Dorsolateral prefrontal cortex (tissue), 120 donors: ENCODE measurements at regions of chr1 and their contacts with region 1.

Region 1: GRCh38 chr1:89987170-89987819 is 7.6 kb upstream of the ZNF326 start:
- DNase-seq: peak in 4 of 10 donors; percentile 45 to 79 (median 49)
- H3K4me3 ChIP-seq: peak overlapping the region in 1 of 59 donors; percentile 4
- H3K27ac ChIP-seq: peak overlapping the region in 21 of 59 donors; percentile 2 to 76 (median 39)
- H3K27me3 ChIP-seq: no peaks in the 10 kb centered on the region
- CTCF ChIP-seq: peak; percentile 82 to 98 (median 93)

Region 2: DNA sequence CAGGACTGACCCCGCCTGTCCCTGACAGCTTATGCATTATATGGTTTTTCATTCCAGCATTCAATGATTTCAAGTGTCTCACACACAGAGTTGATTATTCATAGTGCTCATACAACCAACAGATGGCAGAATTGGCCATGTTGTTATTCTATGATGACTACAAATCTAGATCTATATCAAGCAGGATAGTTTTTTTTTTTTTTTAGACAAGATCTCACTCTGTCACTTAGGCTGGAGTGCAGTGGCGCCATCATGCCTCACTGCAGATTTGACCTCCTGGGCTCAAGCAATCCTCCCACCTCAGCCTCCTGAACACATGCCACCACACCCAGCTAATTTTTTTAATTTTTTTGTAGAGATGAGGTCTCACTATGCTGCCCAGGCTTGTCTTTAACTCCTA is 206.6 kb before region 1 on chr1:
- intact Hi-C with region 1: loop called (anchors 2 to 5 kb)
- DNase-seq: no peak
- H3K4me3 ChIP-seq: no peak overlapping the region
- H3K27ac ChIP-seq: no peak overlapping the region
- H3K27me3 ChIP-seq: no peaks in the 10 kb centered on the region
- CTCF ChIP-seq: peak in 55 of 56 donors; percentile 24 to 77 (median 56)

Region 3: DNA sequence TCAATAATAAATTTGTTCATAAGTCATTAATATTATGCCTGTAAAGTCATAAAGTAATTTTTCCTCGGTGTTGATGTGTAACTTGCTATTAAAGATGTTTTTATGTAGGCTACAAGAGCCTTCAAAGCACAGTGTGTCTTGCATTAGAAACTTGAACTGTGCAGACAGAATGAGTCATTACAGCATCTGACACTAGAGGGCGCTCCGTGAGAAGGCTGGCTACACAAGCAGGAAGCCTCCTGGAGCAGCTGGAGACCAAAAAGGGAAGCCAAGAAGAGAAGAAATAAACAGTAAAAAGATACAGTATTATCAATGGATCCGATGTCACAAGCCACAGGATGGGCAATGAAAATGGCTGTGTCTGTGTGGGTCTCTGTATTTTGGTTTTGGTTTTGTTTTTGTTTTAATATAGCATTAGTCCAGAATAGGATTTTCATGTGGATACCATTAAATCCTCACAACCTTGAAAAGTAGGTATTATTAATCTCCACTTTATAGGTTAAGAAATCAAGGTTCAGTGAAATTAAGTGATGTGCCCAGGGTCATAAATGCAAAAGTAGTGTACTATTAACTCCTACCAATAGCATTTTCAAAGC is 182.6 kb before region 1 on chr1:
- intact Hi-C with region 1: loop called (anchors 1 to 5 kb)
- DNase-seq: peak; percentile 69 to 94 (median 84)
- H3K4me3 ChIP-seq: peak overlapping the region in 5 of 59 donors; percentile 3 to 28 (median 15)
- H3K27ac ChIP-seq: peak overlapping the region in 24 of 59 donors; percentile 1 to 73 (median 39)
- H3K27me3 ChIP-seq: no peaks in the 10 kb centered on the region
- CTCF ChIP-seq: peak; percentile 81 to 99 (median 94)

Region 4: DNA sequence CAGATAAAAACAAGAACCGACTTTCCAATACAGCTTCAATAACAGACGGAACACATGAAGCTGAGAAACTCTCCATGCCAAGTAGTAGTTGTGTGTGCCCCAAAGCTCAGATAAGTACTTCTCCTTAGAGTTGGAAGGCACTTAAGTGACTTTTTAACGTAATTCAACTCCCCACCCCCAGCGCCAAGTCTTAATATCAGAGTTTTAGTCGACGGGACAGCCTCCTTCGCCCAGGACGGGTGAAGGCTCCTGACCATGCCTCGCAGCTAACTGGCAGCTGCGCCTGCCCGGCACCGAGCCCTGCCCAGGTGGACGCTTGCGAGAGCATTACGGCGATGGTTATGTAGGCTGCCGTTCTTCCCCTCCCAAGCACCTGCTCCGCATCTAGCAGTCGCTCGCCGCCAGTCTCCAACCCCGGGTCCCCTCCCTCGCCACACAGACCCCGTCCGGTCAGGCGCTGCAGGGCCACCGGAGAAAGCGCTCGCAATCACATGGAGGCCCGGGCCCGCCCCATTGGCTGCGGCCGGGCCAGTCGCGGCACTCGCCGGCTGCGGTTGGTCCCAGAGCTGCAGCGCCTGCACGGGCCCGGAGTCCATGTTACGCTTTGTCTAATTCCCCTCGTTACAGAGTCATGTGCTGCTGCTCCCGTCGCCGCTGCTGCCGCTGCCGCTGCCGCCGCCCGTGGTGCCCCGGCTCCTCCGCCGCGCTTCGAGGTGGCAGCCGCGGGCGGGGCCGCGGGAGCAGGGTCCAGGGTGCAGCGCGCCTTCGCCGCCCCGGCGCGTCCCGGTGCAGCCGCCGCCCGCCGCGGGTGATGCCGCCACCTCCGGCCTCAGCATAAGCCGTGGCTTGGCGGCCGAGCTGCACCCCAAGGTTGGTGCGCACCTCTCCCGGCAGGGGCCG is 166.6 kb before region 1 on chr1 and contains the start of gene LRRC8D:
- intact Hi-C with region 1: loop called in 1 of 2 experiments (anchors 5 kb)
- DNase-seq: peak; percentile 80 to 97 (median 90)
- H3K4me3 ChIP-seq: peak within 1 kb of the TSS; percentile 56 to 98 (median 91)
- H3K27ac ChIP-seq: peak within 1 kb of the TSS; percentile 73 to 97 (median 91)
- H3K27me3 ChIP-seq: no peaks in the 10 kb centered on the region
- CTCF ChIP-seq: peak in 30 of 56 donors; percentile 8 to 56 (median 28)
- total RNA-seq, gene LRRC8D: 24.3 to 104 (median 44.2) TPM

Region 5: GRCh38 chr1:89843281-89844121 is 143.8 kb before region 1 on chr1:
- intact Hi-C with region 1: loop called in 1 of 2 experiments (anchors 2 kb)
- DNase-seq: peak; percentile 55 to 83 (median 72)
- H3K4me3 ChIP-seq: peak overlapping the region; percentile 61 to 85 (median 73)
- H3K27ac ChIP-seq: peak overlapping the region in 58 of 59 donors; percentile 20 to 90 (median 84)
- H3K27me3 ChIP-seq: no peaks in the 10 kb centered on the region
- CTCF ChIP-seq: peak in 55 of 56 donors; percentile 12 to 84 (median 60)

Region 6: DNA sequence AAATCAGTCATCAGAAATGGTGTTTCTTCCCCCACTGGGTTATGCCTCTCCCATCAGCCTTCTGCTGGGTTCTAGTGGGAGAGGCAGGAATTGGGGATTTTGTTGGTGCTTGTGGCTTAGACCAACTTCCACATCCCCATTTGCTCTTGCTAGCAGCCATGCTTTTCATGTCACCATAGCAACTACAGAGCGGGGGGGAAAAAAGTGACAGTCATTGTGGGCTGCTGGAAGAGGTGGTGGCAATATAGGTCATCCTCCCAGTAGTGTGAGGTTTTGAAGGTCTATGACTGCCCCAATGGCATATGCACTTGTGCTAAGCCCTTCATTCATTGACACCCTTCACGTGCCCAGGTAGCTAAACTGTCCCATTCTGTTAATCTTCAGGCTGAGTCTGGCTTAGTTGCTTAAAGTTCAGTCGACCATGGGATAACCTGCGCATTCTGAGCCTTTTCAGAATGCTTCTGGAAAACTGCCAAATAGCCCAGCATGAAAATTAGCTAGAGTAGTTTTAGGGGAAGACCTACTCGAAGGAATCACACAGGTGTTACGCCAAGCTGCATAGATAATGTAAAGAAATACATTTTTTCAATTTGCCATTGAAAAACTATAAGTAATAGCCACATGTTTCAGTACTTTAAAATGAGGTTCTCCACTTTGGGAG is 46.1 kb before region 1 on chr1:
- intact Hi-C with region 1: loop called in 1 of 2 experiments (anchors 5 kb)
- DNase-seq: no peak
- H3K4me3 ChIP-seq: no peak overlapping the region
- H3K27ac ChIP-seq: peak overlapping the region in 57 of 59 donors; percentile 58 to 97 (median 91)
- H3K27me3 ChIP-seq: no peaks in the 10 kb centered on the region
- CTCF ChIP-seq: no peak